ENCODE measurements at regions of chr16 and their contacts with region 1.

Region 1: GRCh38 chr16:75801307-75801706 is 75.0 kb upstream of the CPHXL start:
- DNase-seq: no peak
- H3K4me3 ChIP-seq: no peak overlapping the region
- H3K27ac ChIP-seq: no peak overlapping the region
- H3K4me1 ChIP-seq: no peaks in the 10 kb centered on the region
- H3K27me3 ChIP-seq: peaks cover 29% of the 10 kb centered on the region
- CTCF ChIP-seq: peak; percentile 41; the same call in 1 of the 2 replicates

Region 2: GRCh38 chr16:75781683-75782343 is 19.5 kb before region 1 on chr16:
- CTCF ChIA-PET with region 1: no interaction called
- POLR2A ChIA-PET with region 1: no interaction called
- intact Hi-C with region 1: loop called (anchors 1 kb)
- DNase-seq: no peak
- H3K4me3 ChIP-seq: no peak overlapping the region
- H3K27ac ChIP-seq: no peak overlapping the region
- H3K4me1 ChIP-seq: no peaks in the 10 kb centered on the region
- H3K27me3 ChIP-seq: peaks cover 65% of the 10 kb centered on the region
- CTCF ChIP-seq: no peak

Region 3: GRCh38 chr16:75868636-75869632 is 67.6 kb after region 1 on chr16:
- CTCF ChIA-PET with region 1: no interaction called
- POLR2A ChIA-PET with region 1: no interaction called
- intact Hi-C with region 1: no loop called
- DNase-seq: no peak
- H3K4me3 ChIP-seq: no peak overlapping the region
- H3K27ac ChIP-seq: no peak overlapping the region
- H3K4me1 ChIP-seq: no peaks in the 10 kb centered on the region
- H3K27me3 ChIP-seq: peaks cover 9% of the 10 kb centered on the region
- CTCF ChIP-seq: no peak

Region 4: DNA sequence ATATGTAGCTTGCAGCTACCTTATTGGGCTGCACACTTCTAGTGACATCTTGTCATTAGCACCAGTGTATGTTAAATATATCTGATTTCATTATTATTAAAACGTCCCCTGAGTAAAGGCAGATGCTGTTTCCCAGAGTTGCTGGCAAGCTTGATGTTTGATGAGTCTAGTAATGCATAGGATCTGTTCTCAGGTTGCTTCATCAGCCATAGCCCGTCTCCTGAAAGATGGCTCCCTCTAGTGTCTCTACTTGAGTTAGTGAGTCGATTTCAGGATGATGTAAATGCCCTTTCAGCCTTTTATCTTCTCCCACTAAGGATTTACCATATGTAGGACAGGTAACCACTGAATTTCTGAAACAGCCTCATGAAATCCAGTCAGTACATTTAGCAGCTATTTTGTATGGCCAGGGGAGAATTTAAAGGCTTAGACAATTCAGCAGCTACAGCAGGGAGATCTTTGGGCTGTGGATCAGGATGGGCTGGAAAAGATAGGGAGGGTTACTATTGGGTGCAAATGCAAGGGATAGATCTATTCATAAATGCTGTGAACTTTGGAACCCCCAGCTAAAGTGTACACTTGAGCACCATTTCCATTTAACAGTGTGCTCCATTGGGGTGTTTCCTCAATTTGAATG is 852.2 kb after region 1 on chr16:
- CTCF ChIA-PET with region 1: interaction called, 3 read pairs
- POLR2A ChIA-PET with region 1: no interaction called
- intact Hi-C with region 1: loop called (anchors 5 kb)
- DNase-seq: peak; percentile 65
- H3K4me3 ChIP-seq: no peak overlapping the region
- H3K27ac ChIP-seq: no peak overlapping the region
- H3K4me1 ChIP-seq: no peaks in the 10 kb centered on the region
- H3K27me3 ChIP-seq: no peaks in the 10 kb centered on the region
- CTCF ChIP-seq: peak; percentile 64